ENCODE measurements at regions of chr7 and their contacts with region 1.

Region 1: DNA sequence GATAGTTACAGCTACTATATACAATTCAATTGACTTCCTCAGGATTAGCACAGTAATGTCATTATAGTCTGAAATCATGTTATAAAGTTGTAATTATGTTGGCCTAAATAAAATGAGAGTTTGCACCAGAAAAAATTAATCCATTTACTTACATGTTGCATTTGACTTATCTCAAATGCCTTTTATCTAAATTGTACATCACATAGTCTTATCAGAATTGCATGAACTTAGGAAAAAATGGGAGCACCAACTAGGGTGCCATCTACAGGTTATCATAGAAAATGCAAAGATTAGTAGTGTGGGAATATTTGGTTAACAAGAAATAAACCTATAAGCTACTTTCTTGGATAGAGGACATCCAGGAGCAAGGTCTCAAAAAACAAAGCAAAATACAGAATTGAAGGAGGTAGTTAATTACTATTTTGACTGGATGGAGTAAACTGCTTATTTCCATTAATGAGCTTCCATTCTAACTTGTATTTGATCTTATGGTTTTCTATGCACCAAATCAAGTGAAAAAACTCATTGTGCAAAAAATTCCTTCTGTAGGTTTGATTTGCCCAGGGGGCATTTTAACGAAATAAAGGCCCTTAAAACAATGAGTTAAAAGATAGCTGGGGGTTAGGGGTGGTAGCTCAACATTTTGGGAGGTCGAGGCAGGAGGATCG is 60.0 kb upstream of the ORC5 start:
- DNase-seq: no peak
- H3K4me3 Mint-ChIP-seq: no peak overlapping the region
- H3K27ac Mint-ChIP-seq: no peak overlapping the region
- H3K4me1 Mint-ChIP-seq: no peaks in the 10 kb centered on the region
- H3K27me3 Mint-ChIP-seq: peaks cover 15% of the 10 kb centered on the region
- CTCF ChIP-seq: no peak

Region 2: DNA sequence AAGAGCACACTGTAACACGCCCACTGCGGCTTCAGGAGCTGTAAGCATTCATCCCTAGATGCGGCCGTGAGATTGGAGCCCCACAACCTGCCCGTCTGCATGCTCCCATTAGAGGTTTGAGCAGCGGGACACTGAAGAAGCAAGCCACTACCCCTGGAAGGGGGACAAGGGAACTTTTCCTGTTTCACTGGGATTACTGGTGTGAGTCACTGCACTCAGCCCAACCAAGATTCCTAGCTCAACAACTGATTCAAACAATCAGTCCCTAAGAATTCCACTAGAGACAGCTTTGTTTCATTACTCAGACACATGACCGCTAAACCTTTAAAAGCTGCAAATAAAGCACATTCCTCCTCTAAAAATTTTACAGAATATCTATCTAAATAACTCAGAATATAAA is 129.9 kb before region 1 on chr7:
- CTCF ChIA-PET with region 1: no interaction called
- intact Hi-C with region 1: no loop called
- DNase-seq: no peak
- H3K4me3 Mint-ChIP-seq: no peak overlapping the region
- H3K27ac Mint-ChIP-seq: no peak overlapping the region
- H3K4me1 Mint-ChIP-seq: no peaks in the 10 kb centered on the region
- H3K27me3 Mint-ChIP-seq: no peaks in the 10 kb centered on the region
- CTCF ChIP-seq: no peak

Region 3: DNA sequence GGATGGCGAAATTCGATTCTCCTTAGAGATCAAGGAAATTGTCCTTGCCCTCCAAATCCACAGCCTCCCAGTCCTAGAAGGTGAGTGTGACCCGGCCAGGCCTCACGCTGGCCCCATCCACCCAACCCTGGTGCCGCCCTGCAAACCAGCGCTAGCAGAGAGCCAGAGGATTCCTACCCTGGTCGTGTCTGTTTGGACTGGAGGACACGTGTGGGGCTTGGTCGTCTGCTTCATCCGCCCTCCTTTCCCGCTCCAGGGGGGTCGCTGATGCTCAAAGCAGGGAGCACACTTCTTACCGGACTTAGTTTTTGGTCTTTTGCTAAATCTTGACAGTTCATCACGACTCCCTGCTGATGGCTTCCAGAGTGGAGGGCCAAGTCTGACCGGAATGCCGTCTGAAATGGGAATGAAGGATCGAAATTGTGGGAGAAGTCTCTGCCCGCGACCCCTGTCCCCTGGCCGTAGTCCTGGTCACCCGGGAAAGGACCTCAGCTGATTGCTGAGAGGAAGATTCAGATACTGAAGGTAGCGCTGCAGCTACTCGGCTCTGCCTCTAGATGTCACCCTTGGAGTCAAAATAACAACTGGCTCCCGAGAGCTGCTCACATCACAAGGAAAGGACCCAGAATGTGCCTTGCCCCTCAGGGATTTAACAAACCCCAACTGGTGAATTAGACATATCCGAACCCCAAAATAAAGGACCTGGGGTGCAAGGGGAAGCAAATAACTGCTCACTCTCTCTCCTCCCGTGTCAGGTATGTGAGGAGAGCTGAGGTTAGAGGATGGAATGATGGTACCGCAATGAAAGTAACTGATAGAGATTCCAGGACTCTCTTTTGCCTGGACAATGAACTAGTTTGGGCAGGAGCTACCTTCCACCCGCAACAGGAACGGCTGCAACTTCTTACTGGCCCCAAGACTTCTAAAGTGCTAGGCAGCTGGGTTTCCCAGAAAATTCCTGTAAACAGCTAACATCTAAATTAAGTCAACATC is 36.5 kb before region 1 on chr7:
- CTCF ChIA-PET with region 1: interaction called, 6 read pairs
- intact Hi-C with region 1: loop called (anchors 1 kb)
- DNase-seq: peak; percentile 34
- H3K4me3 Mint-ChIP-seq: no peak overlapping the region
- H3K27ac Mint-ChIP-seq: no peak overlapping the region
- H3K4me1 Mint-ChIP-seq: no peaks in the 10 kb centered on the region
- H3K27me3 Mint-ChIP-seq: peaks cover 22% of the 10 kb centered on the region
- CTCF ChIP-seq: peak; percentile 33

Measured in Calu3 (cell line).